Activated naive CD4-positive, alpha-beta T cell treated with anti-CD3 and anti-CD28 coated beads, Interleukin-2, amount 10 ng/mL, durations not matched to agents 7 days and 5 days (primary cell): ENCODE measurements at regions of chr11 and their contacts with region 1.

Region 1: GRCh38 chr11:66069715-66070603 is at the start of gene PACS1:
- DNase-seq: peak; percentile 87
- H3K4me3 Mint-ChIP-seq: peak within 1 kb of the TSS; percentile 98
- H3K27ac Mint-ChIP-seq: peak within 1 kb of the TSS; percentile 95
- H3K4me1 Mint-ChIP-seq: peaks cover 70% of the 10 kb centered on the region
- H3K27me3 Mint-ChIP-seq: no peaks in the 10 kb centered on the region

Region 2: DNA sequence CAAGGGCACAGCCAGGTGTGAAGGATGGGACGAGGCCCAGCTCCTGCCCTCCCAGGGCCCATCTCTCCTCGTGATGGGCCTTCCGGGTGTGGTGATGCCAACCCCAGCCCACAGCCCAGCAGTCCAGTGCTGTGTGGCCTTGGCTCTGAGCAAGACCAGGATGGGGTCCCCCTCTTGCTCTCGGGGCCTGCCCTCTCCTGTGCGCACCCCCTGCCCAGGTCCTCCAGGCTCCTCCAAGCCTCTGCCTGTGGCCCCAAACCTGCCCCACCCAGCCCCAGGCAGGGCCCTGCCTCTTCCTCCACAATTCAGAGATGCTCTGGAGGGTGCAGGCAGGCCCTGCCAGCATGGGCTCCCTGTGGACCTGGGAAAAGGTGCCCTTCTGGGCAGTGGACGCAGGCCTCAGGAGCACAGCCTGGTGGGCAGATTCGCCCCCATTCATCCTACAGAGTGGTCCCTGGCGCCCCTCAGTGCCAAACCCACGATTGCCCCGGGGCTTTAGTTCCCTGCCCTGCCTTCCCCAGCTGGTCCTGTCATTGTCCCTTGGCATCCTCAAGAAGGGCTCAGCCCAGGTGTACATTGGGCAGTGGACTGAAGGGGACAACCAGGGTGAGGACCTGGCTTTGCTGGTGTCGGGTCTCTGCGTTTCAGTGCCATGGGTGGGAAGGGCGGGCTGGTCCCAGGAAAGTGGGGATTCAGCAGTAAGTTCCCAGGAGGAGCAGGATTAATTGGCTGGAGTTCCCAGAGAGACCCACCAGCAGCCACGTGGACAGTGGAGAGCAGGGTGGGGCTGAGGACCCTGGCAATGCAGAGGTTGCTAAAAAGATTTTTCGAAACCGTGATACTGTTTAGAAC is 87.8 kb before region 1 on chr11:
- CTCF ChIA-PET with region 1: no interaction called
- DNase-seq: no peak
- H3K4me3 Mint-ChIP-seq: no peak overlapping the region
- H3K27ac Mint-ChIP-seq: no peak overlapping the region
- H3K4me1 Mint-ChIP-seq: no peaks in the 10 kb centered on the region
- H3K27me3 Mint-ChIP-seq: no peaks in the 10 kb centered on the region

Region 3: GRCh38 chr11:66051766-66052663 is 17.9 kb before region 1 on chr11 and contains the start of gene SF3B2:
- CTCF ChIA-PET with region 1: interaction called, 48 read pairs
- DNase-seq: peak; percentile 98
- H3K4me3 Mint-ChIP-seq: peak within 1 kb of the TSS; percentile 93
- H3K27ac Mint-ChIP-seq: peak within 1 kb of the TSS; percentile 95
- H3K4me1 Mint-ChIP-seq: peaks cover 48% of the 10 kb centered on the region
- H3K27me3 Mint-ChIP-seq: peaks cover 27% of the 10 kb centered on the region

Region 4: DNA sequence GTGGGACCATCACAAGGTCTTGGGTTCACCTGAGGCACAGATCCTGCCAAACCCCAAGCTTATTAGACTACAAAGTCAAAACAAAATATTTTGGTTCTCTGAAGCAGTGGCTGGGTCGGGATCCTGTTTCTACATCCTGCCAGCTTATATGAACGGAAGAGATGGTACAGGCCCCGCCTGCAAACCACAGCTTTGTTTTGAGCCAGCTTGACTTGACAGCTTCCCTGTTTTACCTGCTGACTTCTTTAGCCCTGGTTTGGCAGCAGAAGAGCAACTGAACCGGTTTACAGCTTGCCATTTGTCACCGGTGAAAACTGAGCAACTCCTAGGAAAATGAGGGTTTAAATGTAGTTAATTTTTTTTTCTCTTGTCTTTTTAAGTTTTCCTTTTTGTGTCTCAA is 11.5 kb after region 1 on chr11:
- CTCF ChIA-PET with region 1: interaction called, 37 read pairs
- DNase-seq: peak; percentile 91
- H3K4me3 Mint-ChIP-seq: peak overlapping the region; percentile 83
- H3K27ac Mint-ChIP-seq: peak overlapping the region; percentile 100
- H3K4me1 Mint-ChIP-seq: peaks cover 78% of the 10 kb centered on the region
- H3K27me3 Mint-ChIP-seq: no peaks in the 10 kb centered on the region

Region 5: GRCh38 chr11:66100272-66101065 is 30.5 kb after region 1 on chr11:
- CTCF ChIA-PET with region 1: interaction called, 13 read pairs
- DNase-seq: peak; percentile 86
- H3K4me3 Mint-ChIP-seq: peak overlapping the region; percentile 78
- H3K27ac Mint-ChIP-seq: peak overlapping the region; percentile 96
- H3K4me1 Mint-ChIP-seq: peaks cover 47% of the 10 kb centered on the region
- H3K27me3 Mint-ChIP-seq: no peaks in the 10 kb centered on the region

Region 6: DNA sequence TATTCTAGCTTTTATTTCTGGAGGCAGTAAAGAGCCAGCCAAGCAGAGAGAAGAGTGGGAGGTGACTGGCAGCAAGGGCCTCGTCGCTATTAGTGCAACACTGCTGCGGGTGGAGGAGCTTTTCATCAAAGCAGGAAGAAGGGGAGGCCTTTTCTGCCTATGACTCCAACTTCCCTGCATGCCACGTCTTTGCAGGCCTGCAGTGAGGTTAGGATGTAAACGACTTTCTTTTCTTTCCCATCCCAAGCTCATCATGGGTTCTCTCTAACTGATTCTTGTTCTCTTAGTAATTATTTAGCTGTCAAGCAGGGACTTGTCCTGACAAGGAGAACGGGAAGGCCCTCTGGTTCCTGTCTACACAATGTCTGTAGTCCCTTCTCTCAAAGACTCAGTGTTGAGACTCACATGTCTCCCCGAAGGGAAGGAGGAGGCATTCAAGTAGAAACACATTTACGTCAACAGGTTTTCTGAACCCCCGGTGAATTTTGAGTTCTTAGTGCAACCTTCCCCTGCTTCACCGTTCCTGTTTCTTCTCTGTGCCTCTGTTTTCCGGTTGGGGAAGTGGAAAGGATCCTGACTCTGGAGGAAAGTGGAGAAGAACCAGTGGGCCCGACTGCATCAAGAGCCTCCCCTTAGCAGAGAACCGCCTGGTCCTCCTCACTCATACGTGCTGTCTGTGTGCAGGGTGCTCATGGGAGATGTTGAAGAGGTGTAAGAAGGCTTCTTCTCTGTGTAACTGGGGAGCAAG is 57.0 kb after region 1 on chr11:
- CTCF ChIA-PET with region 1: interaction called, 12 read pairs
- DNase-seq: peak; percentile 74
- H3K4me3 Mint-ChIP-seq: peak overlapping the region; percentile 62
- H3K27ac Mint-ChIP-seq: peak overlapping the region; percentile 97
- H3K4me1 Mint-ChIP-seq: peaks cover 64% of the 10 kb centered on the region
- H3K27me3 Mint-ChIP-seq: no peaks in the 10 kb centered on the region

Region 7: DNA sequence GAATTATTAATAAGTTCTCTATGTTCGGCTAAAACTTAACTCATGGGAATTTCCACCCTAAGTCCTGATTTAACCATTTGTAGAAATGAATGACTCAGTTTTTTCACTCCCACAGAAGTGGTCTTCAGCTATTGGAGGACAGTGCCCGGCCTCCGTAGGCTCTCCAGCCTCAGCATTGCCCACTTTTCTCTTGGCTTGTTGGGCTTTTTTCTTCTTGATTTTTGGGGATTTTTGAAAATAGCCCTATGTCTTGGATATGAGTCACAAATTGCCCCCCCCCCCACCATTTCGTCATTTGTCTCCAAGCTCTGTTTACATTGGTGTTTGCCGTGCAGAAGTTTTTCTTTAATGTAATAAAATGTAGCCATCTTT is 66.8 kb after region 1 on chr11:
- CTCF ChIA-PET with region 1: interaction called, 89 read pairs
- DNase-seq: no peak
- H3K4me3 Mint-ChIP-seq: no peak overlapping the region
- H3K27ac Mint-ChIP-seq: no peak overlapping the region
- H3K4me1 Mint-ChIP-seq: peaks cover 22% of the 10 kb centered on the region
- H3K27me3 Mint-ChIP-seq: no peaks in the 10 kb centered on the region

Region 8: GRCh38 chr11:66282468-66283386 is 212.8 kb after region 1 on chr11:
- CTCF ChIA-PET with region 1: no interaction called
- DNase-seq: peak; percentile 100
- H3K4me3 Mint-ChIP-seq: peak overlapping the region; percentile 18
- H3K27ac Mint-ChIP-seq: peak overlapping the region; percentile 58
- H3K4me1 Mint-ChIP-seq: peaks cover 49% of the 10 kb centered on the region
- H3K27me3 Mint-ChIP-seq: peaks cover 36% of the 10 kb centered on the region